HAP-1 (cell line): ENCODE measurements at regions of chr9 and their contacts with region 1.

Region 1: GRCh38 chr9:114653556-114654159 is 3.9 kb downstream of the TEX53 start:
- DNase-seq: peak; percentile 65 to 89
- H3K4me3 ChIP-seq: no peak overlapping the region
- H3K4me1 ChIP-seq: peaks cover 4% of the 10 kb centered on the region; the same call in 1 of the 2 replicates
- H3K27me3 ChIP-seq: no peaks in the 10 kb centered on the region

Region 2: DNA sequence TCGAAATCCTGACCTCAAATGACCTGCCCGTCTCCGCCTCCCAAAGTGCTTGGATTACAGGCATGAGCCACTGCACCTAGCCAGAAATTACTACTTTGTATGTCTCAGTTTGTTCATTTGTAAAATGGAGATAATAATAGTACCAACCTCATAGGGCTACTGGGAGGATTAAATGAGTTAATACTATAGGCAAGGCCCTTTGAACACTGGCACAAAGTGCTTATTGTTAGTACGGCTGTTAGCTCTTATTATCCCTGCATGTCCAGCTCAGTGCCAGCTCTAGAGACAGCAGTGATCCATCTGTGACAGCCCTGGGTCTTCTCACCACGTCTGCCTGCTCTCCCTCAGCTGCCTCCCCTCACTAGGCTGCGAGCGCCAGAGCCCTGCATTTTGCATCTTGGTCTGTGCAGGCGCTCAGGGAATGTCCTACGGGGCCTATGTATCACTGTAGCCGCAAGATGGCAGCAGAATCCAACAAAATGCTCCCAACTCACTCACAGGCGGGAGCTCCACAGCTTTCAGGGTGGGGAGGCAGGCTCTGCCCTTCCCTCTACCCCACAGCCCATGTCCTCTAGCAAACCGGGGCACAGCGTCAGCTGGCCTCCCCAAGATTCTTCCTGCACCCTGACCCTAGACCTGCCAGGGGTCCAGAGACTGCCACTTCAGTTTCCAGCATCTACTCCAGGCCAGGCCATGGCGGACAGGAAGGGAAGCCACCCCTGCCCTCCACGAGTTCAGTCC is 248.2 kb before region 1 on chr9:
- in situ Hi-C with region 1: loop called (anchors 10 kb)
- DNase-seq: peak; percentile 71 to 86
- H3K4me3 ChIP-seq: no peak overlapping the region
- H3K4me1 ChIP-seq: peaks cover 13% of the 10 kb centered on the region
- H3K27me3 ChIP-seq: no peaks in the 10 kb centered on the region

Region 3: DNA sequence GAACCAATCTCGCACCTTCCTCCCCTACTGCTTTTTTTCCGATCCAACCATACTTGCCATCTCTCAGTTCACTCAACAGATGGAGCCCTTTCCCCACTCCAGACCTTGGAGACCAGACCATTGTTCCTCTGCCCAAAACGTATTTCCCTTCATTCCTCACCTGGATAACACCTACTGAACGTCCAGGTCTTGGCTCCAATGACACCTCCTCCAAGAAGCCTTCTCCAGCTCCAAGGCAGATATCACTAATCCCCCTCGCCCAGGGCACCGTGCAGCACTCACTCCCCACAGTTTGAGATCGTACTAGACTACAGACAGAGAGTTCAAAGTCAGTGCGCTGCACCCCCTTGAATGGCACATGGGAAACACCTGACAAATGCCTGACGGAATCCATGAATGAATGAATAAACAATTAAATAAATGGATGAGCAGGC is 218.8 kb before region 1 on chr9:
- in situ Hi-C with region 1: loop called (anchors 10 kb)
- DNase-seq: peak; percentile 45 to 46
- H3K4me3 ChIP-seq: no peak overlapping the region
- H3K4me1 ChIP-seq: no peaks in the 10 kb centered on the region
- H3K27me3 ChIP-seq: no peaks in the 10 kb centered on the region

Region 4: GRCh38 chr9:114811301-114811700 is 157.6 kb after region 1 on chr9:
- in situ Hi-C with region 1: no loop called
- DNase-seq: no peak
- H3K4me3 ChIP-seq: no peak overlapping the region
- H3K4me1 ChIP-seq: no peaks in the 10 kb centered on the region
- H3K27me3 ChIP-seq: no peaks in the 10 kb centered on the region